IMR-90 (cell line): ENCODE measurements at regions of chr2 and their contacts with region 1.

Region 1: GRCh38 chr2:101036562-101037457 is 34.7 kb downstream of the RPL31 start:
- DNase-seq: peak; percentile 33
- ATAC-seq: peak; percentile 64
- H3K4me3 ChIP-seq: no peak overlapping the region
- H3K27ac ChIP-seq: no peak overlapping the region
- H3K4me1 ChIP-seq: no peaks in the 10 kb centered on the region
- H3K27me3 ChIP-seq: no peaks in the 10 kb centered on the region
- CTCF ChIP-seq: peak; percentile 78
- POLR2A ChIP-seq: no peak
- RAD21 ChIP-seq: peak; percentile 79

Region 2: DNA sequence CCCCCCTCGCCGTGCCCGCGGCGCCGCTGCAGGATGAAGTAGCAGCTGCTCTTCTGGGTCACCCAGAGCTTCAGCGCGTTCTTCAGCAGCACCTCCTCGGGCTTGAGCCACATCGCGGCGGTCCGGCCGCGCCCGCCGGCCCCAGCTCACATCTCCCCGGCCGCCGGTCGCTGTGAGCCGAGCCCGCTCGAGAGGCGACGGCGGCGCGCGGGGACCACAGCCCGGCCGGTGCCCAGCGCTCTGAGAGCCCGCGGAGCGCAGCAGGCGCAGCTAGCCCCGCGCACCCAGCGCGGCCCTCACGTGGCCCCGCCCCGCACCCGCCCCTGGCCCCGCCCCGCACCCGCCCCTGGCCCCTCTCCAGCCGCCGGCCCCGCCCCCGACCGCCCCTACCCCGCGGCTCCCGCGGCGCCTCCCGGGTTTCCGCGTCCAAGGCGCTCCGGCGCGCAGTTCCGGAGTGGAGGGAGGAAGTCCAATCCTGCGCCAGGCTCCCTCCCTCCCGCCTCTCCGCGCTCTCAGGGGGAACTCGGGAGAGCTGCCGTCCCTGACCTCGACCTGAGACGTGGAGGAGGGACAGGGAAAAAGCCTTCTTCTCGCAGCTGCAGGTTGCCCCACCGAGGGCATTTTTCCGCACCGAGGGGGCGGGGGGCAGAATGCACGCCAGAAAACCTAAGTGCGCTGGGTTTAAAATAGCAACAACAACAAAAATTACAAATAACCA is 114.5 kb after region 1 on chr2 and contains the start of gene TBC1D8:
- CTCF ChIA-PET with region 1: interaction called, 19 read pairs
- POLR2A ChIA-PET with region 1: no interaction called
- dilution Hi-C with region 1: no loop called
- in situ Hi-C with region 1: no loop called
- intact Hi-C with region 1: loop called (anchors 1 kb)
- DNase-seq: peak; percentile 68
- ATAC-seq: peak; percentile 95
- H3K4me3 ChIP-seq: peak within 1 kb of the TSS; percentile 77
- H3K27ac ChIP-seq: peak within 1 kb of the TSS; percentile 62
- H3K4me1 ChIP-seq: peaks cover 7% of the 10 kb centered on the region
- H3K27me3 ChIP-seq: peaks cover 7% of the 10 kb centered on the region; the same call in 1 of the 2 replicates
- CTCF ChIP-seq: no peak
- POLR2A ChIP-seq: no peak
- RAD21 ChIP-seq: no peak
- total RNA-seq, gene TBC1D8: 0.83 and 1.3 TPM in 2 replicates

Region 3: DNA sequence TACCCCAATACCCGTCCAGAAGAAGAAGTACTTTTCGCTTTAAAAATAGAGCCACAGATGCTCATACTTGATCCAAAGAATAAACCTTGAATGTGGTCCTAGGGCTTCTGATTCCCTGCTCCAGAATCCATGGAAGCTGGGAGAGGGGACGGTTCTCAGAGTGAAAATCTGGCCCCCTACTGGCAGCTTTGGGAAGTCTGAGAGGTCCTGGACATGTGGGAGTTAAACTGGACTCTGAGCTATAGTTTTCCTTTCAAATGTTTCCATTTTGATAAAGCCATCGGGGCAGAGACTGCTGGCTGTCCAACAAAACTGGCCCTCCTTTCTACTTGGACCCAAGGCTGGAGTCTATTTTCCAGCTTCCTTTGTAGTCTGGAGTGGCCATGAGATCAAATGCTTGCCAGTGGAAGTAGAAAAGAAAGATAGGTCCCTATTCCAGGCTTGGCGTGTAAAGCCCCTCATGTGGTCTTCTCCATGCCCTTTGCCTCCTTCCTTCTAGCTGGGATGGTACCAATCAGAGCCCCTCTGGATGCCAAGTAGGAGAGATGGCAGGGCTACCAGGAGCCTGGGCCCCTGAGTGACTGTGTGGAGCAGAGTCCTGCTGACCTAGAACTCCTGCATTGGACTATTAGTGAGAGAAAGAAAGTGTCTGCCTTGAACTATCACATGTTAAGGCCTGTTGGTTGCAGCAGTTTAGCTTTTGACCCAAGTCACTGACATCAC is 152.0 kb after region 1 on chr2:
- CTCF ChIA-PET with region 1: interaction called, 3 read pairs
- POLR2A ChIA-PET with region 1: no interaction called
- dilution Hi-C with region 1: no loop called
- in situ Hi-C with region 1: no loop called
- intact Hi-C with region 1: loop called (anchors 2 kb)
- DNase-seq: peak; percentile 44
- ATAC-seq: peak; percentile 90
- H3K4me3 ChIP-seq: no peak overlapping the region
- H3K27ac ChIP-seq: no peak overlapping the region
- H3K4me1 ChIP-seq: no peaks in the 10 kb centered on the region
- H3K27me3 ChIP-seq: peaks cover 23% of the 10 kb centered on the region
- CTCF ChIP-seq: peak; percentile 64
- POLR2A ChIP-seq: no peak
- RAD21 ChIP-seq: peak; percentile 62

Region 4: DNA sequence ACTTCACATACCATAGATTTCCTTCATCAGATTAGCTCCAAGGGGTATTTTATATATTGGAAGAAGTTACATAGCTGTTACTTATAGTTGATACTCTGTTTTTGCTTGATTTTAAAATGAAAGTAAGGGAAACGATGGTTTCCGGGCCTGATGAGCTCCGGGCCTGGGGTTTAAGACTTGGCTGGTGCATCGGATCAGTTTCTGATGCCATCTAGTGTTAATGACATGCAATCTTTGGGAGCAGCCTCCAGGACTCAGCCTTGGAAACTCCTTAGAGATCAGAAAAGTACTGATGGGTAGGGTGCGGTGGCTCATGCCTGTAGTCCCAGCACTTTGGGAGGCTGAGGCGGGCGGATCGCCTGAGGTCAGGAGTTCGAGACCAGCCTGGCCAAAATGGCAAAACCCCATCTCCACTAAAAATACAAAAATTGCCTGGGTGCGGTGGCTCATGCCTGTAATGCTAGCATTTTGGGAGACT is 168.8 kb after region 1 on chr2:
- CTCF ChIA-PET with region 1: interaction called, 15 read pairs
- POLR2A ChIA-PET with region 1: no interaction called
- dilution Hi-C with region 1: no loop called
- in situ Hi-C with region 1: loop called (anchors 5 kb)
- intact Hi-C with region 1: loop called (anchors 1 kb)
- DNase-seq: peak; percentile 80
- ATAC-seq: peak; percentile 99
- H3K4me3 ChIP-seq: no peak overlapping the region
- H3K27ac ChIP-seq: no peak overlapping the region
- H3K4me1 ChIP-seq: no peaks in the 10 kb centered on the region; the same call in 1 of the 2 replicates
- H3K27me3 ChIP-seq: no peaks in the 10 kb centered on the region
- CTCF ChIP-seq: peak; percentile 77
- POLR2A ChIP-seq: no peak
- RAD21 ChIP-seq: peak; percentile 75